Activated naive CD4-positive, alpha-beta T cell treated with anti-CD3 and anti-CD28 coated beads for 36 hours (primary cell): ENCODE measurements at regions of chr2 and their contacts with region 1.

Region 1: GRCh38 chr2:43131024-43131889 is 95.1 kb downstream of the ZFP36L2 start:
- DNase-seq: peak; percentile 94
- H3K4me3 Mint-ChIP-seq: peak overlapping the region; percentile 20
- H3K27ac Mint-ChIP-seq: peak overlapping the region; percentile 18
- H3K4me1 Mint-ChIP-seq: peaks cover 87% of the 10 kb centered on the region
- H3K27me3 Mint-ChIP-seq: no peaks in the 10 kb centered on the region

Region 2: DNA sequence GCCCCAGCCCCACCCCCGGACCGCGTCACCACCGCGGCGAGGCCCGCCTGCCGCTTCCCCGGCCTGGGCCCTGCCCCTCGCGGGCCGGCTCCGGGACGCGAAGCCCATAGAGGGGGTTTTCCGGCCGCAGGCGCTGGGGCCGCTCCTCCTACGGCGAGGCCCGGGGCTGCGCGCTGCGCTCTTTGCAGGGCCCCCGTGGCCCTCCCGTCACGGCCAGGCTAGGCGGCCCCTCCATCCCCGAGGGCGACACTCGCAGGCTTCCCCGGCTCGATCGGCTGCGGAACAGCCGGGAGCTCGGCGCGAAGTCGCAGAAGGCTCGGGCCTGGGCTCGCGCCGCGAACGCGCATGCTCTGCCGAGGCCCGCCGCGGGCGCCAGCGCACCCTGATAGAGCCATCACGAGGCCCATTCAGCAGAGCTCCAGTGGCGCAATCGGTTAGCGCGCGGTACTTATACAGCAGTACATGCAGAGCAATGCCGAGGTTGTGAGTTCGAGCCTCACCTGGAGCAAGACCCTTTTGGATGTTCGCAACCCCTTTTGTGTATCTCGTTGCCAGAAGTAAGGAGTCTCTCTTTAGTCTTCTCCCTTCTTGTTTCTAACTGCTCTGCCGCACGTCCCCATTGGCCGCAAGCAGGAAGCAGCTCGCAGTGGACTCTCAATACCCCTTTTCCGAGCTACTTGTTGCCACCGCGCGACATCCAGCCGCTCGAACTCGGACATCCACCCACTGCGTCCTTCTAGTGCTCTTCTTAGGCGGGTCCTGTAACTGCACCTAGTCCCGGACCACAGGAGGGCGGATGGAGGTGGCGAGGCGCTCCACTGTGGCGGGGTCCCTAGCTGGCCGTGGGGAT is 320.9 kb before region 1 on chr2:
- CTCF ChIA-PET with region 1: no interaction called
- intact Hi-C with region 1: loop called (anchors 5 kb)
- DNase-seq: peak; percentile 96
- H3K4me3 Mint-ChIP-seq: peak overlapping the region; percentile 88
- H3K27ac Mint-ChIP-seq: peak overlapping the region; percentile 93
- H3K4me1 Mint-ChIP-seq: peaks cover 11% of the 10 kb centered on the region
- H3K27me3 Mint-ChIP-seq: no peaks in the 10 kb centered on the region

Region 3: GRCh38 chr2:42974721-42975717 is 156.2 kb before region 1 on chr2:
- CTCF ChIA-PET with region 1: interaction called, 9 read pairs
- intact Hi-C with region 1: loop called (anchors 2 kb)
- DNase-seq: peak; percentile 69
- H3K4me3 Mint-ChIP-seq: no peak overlapping the region
- H3K27ac Mint-ChIP-seq: no peak overlapping the region
- H3K4me1 Mint-ChIP-seq: peaks cover 13% of the 10 kb centered on the region
- H3K27me3 Mint-ChIP-seq: no peaks in the 10 kb centered on the region

Region 4: GRCh38 chr2:43158259-43158880 is 27.1 kb after region 1 on chr2:
- CTCF ChIA-PET with region 1: interaction called, 6 read pairs
- intact Hi-C with region 1: loop called (anchors 1 kb)
- DNase-seq: peak; percentile 79
- H3K4me3 Mint-ChIP-seq: peak overlapping the region; percentile 77
- H3K27ac Mint-ChIP-seq: peak overlapping the region; percentile 99
- H3K4me1 Mint-ChIP-seq: peaks cover 72% of the 10 kb centered on the region
- H3K27me3 Mint-ChIP-seq: no peaks in the 10 kb centered on the region

Region 5: GRCh38 chr2:43194121-43194869 is 63.0 kb after region 1 on chr2:
- CTCF ChIA-PET with region 1: interaction called, 12 read pairs
- intact Hi-C with region 1: loop called (anchors 1 kb)
- DNase-seq: no peak
- H3K4me3 Mint-ChIP-seq: peak overlapping the region; percentile 79
- H3K27ac Mint-ChIP-seq: peak overlapping the region; percentile 93
- H3K4me1 Mint-ChIP-seq: peaks cover 57% of the 10 kb centered on the region
- H3K27me3 Mint-ChIP-seq: no peaks in the 10 kb centered on the region

Region 6: GRCh38 chr2:43542285-43542937 is 411.2 kb after region 1 on chr2:
- CTCF ChIA-PET with region 1: interaction called, 15 read pairs
- intact Hi-C with region 1: loop called (anchors 1 kb)
- DNase-seq: no peak
- H3K4me3 Mint-ChIP-seq: no peak overlapping the region
- H3K27ac Mint-ChIP-seq: no peak overlapping the region
- H3K4me1 Mint-ChIP-seq: peaks cover 11% of the 10 kb centered on the region
- H3K27me3 Mint-ChIP-seq: no peaks in the 10 kb centered on the region